ENCODE measurements at regions of chr17 and their contacts with region 1.

Region 1: GRCh38 chr17:68205251-68205807 is 42.5 kb upstream of the AMZ2 start:
- DNase-seq: peak; percentile 88
- H3K4me3 ChIP-seq: peak overlapping the region; percentile 38 to 56 (median 50)
- H3K27ac ChIP-seq: peak overlapping the region; percentile 52
- H3K4me1 ChIP-seq: peaks cover 4% of the 10 kb centered on the region
- H3K27me3 ChIP-seq: peaks cover 0 to under 1% of the 10 kb centered on the region in 2 experiments
- CTCF ChIP-seq: peak; percentile 84 to 96
- POLR2A ChIP-seq: peak; percentile 77

Region 2: GRCh38 chr17:67737145-67737544 is 468.2 kb before region 1 on chr17:
- CTCF ChIA-PET with region 1: no interaction called
- POLR2A ChIA-PET with region 1: no interaction called
- dilution Hi-C with region 1: no loop called
- intact Hi-C with region 1: no loop called
- DNase-seq: no peak
- H3K4me3 ChIP-seq: no peak overlapping the region
- H3K27ac ChIP-seq: no peak overlapping the region
- H3K4me1 ChIP-seq: no peaks in the 10 kb centered on the region
- H3K27me3 ChIP-seq: no peaks in the 10 kb centered on the region
- CTCF ChIP-seq: no peak
- POLR2A ChIP-seq: no peak

Region 3: GRCh38 chr17:68247445-68248198 is 42.3 kb after region 1 on chr17 and contains the start of gene AMZ2:
- CTCF ChIA-PET with region 1: interaction called, 8 read pairs
- POLR2A ChIA-PET with region 1: no interaction called
- dilution Hi-C with region 1: no loop called
- intact Hi-C with region 1: loop called (anchors 1 kb)
- DNase-seq: peak; percentile 96
- H3K4me3 ChIP-seq: peak within 1 kb of the TSS; percentile 41 to 63 (median 51)
- H3K27ac ChIP-seq: peak within 1 kb of the TSS; percentile 54
- H3K4me1 ChIP-seq: peaks cover 8% of the 10 kb centered on the region
- H3K27me3 ChIP-seq: no peaks in the 10 kb centered on the region
- CTCF ChIP-seq: no peak
- POLR2A ChIP-seq: peak; percentile 89
- total RNA-seq, gene AMZ2: 53.7 and 57.3 TPM in 2 replicates

Region 4: DNA sequence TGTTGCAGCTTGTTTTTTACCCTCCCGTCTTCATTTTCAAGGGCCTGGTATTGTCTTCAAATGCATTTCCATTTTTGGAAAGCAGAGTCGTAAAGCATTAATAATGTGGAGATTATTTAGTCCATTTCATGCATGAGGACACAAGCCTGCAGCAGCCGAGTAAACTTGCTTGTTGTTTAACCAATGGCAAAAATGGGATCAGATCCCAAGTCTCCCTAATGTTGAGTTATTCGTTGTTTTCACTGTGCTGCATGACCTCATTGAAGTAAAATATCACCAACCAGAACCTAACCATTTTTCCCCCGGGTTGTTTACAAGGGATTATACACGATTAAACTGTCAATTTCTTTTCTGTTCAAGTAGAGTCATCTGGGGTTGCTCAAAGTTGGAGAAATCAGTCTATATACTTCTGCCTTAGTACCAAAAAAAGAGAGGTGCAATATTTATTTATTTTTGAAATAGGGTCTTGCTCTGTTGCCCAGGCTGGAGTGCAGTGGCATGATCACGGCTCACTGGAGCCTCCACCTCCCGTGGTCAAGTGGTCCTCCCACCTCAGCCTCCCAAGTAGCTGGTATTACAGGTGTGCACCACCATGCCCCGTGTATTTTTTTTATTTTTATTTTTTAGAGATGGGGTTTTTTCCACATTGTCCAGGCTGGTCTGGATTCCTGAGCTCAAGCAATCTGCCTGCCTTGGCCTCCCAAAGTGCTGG is 54.9 kb after region 1 on chr17:
- CTCF ChIA-PET with region 1: no interaction called
- POLR2A ChIA-PET with region 1: no interaction called
- dilution Hi-C with region 1: no loop called
- intact Hi-C with region 1: no loop called
- DNase-seq: no peak
- H3K4me3 ChIP-seq: no peak overlapping the region
- H3K27ac ChIP-seq: no peak overlapping the region
- H3K4me1 ChIP-seq: peaks cover 18% of the 10 kb centered on the region
- H3K27me3 ChIP-seq: no peaks in the 10 kb centered on the region
- CTCF ChIP-seq: no peak
- POLR2A ChIP-seq: no peak

Region 5: GRCh38 chr17:68435876-68436842 is 230.8 kb after region 1 on chr17:
- CTCF ChIA-PET with region 1: interaction called, 11 read pairs
- POLR2A ChIA-PET with region 1: no interaction called
- dilution Hi-C with region 1: no loop called
- intact Hi-C with region 1: loop called (anchors 2 kb)
- DNase-seq: peak; percentile 83
- H3K4me3 ChIP-seq: no peak overlapping the region
- H3K27ac ChIP-seq: peak overlapping the region; percentile 63
- H3K4me1 ChIP-seq: peaks cover 30% of the 10 kb centered on the region
- H3K27me3 ChIP-seq: no peaks in the 10 kb centered on the region
- CTCF ChIP-seq: peak; percentile 89 to 95
- POLR2A ChIP-seq: no peak

Measured in endothelial cell of umbilical vein (primary cell).